ENCODE measurements at regions of chr2 and their contacts with region 1.

Region 1: DNA sequence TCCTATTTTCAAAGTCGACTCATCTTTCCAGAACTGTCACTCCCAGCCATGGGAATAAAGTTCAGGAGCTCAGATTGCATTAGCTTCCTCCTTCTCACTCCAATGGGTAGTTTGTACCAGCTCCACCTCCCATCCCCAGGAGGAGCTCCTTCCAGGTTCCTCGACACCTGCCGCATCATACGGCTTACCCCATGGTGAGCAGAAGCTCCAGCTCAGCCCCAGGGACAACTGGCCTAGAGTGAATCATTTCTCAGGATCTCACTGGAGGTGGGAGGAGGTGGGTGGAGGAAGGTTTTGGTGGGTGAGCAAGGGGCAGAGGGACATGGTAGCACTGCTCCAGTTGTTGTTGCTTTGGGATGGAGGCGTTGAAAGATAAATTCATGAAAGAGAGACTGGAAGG is 196.3 kb upstream of the PKDCC start:
- DNase-seq: no peak
- ATAC-seq: no peak
- H3K4me3 Mint-ChIP-seq: no peak overlapping the region
- H3K27ac Mint-ChIP-seq: peak overlapping the region in 1 of 10 donors; percentile 5
- H3K4me1 Mint-ChIP-seq: no peaks in the 10 kb centered on the region
- H3K27me3 Mint-ChIP-seq: peaks cover 16 to 45% (median 28%) of the 10 kb centered on the region in 5 donors

Region 2: GRCh38 chr2:41840702-41841551 is 10.6 kb before region 1 on chr2:
- POLR2A ChIA-PET with region 1: interaction called, 10 read pairs
- DNase-seq: peak; percentile 94 to 99 (median 98)
- ATAC-seq: peak; percentile 97 to 98
- H3K4me3 Mint-ChIP-seq: peak overlapping the region; percentile 91 to 99 (median 96)
- H3K27ac Mint-ChIP-seq: peak overlapping the region; percentile 89 to 99 (median 97)
- H3K4me1 Mint-ChIP-seq: peaks cover 6 to 16% (median 12%) of the 10 kb centered on the region in 4 donors
- H3K27me3 Mint-ChIP-seq: peaks cover 8 to 28% (median 19%) of the 10 kb centered on the region in 5 donors

Measured in naive thymus-derived CD8-positive, alpha-beta T cell (primary cell).